Right ventricle myocardium superior (tissue), 1 donor: ENCODE measurements at regions of chr22 and their contacts with region 1.

Region 1: DNA sequence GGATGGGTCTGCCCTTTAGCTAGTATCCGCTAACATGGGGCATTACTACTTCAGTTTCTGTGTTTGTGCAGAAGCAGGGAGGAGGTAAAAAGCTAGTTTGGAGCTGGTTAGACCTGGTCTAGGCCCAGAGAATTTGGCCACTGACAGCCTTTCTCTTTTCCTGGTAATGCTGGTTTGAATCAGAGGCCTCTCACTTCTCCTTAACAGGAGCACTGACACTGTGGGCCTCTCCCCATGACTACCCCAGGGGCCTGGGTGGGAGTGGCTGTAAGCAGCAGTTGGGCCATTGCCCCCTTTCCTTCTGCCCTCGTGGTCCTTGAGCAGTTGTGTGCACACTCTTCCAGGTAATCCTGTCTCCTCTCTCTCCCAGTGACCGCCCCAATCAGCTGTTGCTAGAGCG is 8.5 kb upstream of the SLC25A18 start:
- DNase-seq: no peak
- ATAC-seq: no peak

Region 2: GRCh38 chr22:17606496-17606895 is 51.7 kb after region 1 on chr22:
- intact Hi-C with region 1: loop called (anchors 5 kb)
- DNase-seq: no peak
- ATAC-seq: peak; percentile 77

Region 3: DNA sequence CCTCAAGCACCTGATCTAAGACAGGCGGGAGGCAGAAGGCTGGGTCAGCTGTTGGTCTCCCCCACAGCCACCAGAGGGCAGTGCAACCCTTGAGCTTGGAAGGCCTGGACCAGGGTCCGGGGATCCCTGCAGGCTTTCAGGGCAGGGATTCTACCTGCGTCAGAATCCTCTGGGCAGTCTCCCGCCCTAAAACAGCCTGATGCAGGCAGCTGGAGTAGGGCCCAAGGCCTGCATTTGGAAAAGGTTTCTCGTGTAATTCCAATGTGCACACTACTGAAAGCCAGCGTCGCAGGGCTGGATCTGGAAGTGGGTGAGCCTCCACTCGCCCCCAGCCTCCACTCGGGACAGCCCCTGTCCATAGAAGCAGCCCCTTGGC is 187.7 kb after region 1 on chr22:
- intact Hi-C with region 1: no loop called
- DNase-seq: peak; percentile 63
- ATAC-seq: peak; percentile 72